Activated B cell treated with CpG ODN at 0.5 μM for 24 hours (primary cell): ENCODE measurements at regions of chrX and their contacts with region 1.

Region 1: GRCh38 chrX:101407748-101408531 is at the starts of genes GLA and HNRNPH2:
- DNase-seq: peak; percentile 71
- ATAC-seq: peak; percentile 86
- H3K4me3 Mint-ChIP-seq: peak within 1 kb of the TSS; percentile 88
- H3K27ac Mint-ChIP-seq: peak within 1 kb of the TSS; percentile 99
- H3K4me1 Mint-ChIP-seq: peaks cover 37% of the 10 kb centered on the region
- H3K27me3 Mint-ChIP-seq: no peaks in the 10 kb centered on the region
- CTCF ChIP-seq: no peak
- total RNA-seq, gene GLA: 32.0 and 32.2 TPM in 2 replicates
- total RNA-seq, gene HNRNPH2: 70.5 and 76.9 TPM in 2 replicates

Region 2: GRCh38 chrX:100819837-100820666 is 587.9 kb before region 1 on chrX and contains the start of gene CSTF2:
- CTCF ChIA-PET with region 1: no interaction called
- POLR2A ChIA-PET with region 1: no interaction called
- intact Hi-C with region 1: loop called (anchors 10 kb)
- DNase-seq: peak; percentile 68
- ATAC-seq: peak; percentile 96
- H3K4me3 Mint-ChIP-seq: peak within 1 kb of the TSS; percentile 93
- H3K27ac Mint-ChIP-seq: peak within 1 kb of the TSS; percentile 94
- H3K4me1 Mint-ChIP-seq: peaks cover 4% of the 10 kb centered on the region
- H3K27me3 Mint-ChIP-seq: peaks cover 5% of the 10 kb centered on the region
- CTCF ChIP-seq: no peak
- total RNA-seq, gene CSTF2: 27.7 TPM in 2 replicates

Region 3: GRCh38 chrX:101348452-101349192 is 59.3 kb before region 1 on chrX and contains the start of gene TIMM8A:
- CTCF ChIA-PET with region 1: no interaction called
- POLR2A ChIA-PET with region 1: interaction called, 6 read pairs
- intact Hi-C with region 1: loop called (anchors 1 kb)
- DNase-seq: peak; percentile 71
- ATAC-seq: peak; percentile 99
- H3K4me3 Mint-ChIP-seq: peak within 1 kb of the TSS; percentile 91
- H3K27ac Mint-ChIP-seq: peak within 1 kb of the TSS; percentile 89
- H3K4me1 Mint-ChIP-seq: peaks cover 13% of the 10 kb centered on the region
- H3K27me3 Mint-ChIP-seq: no peaks in the 10 kb centered on the region
- CTCF ChIP-seq: no peak
- total RNA-seq, gene TIMM8A: 16.8 and 17.1 TPM in 2 replicates

Region 4: GRCh38 chrX:101370888-101371504 is 36.9 kb before region 1 on chrX:
- CTCF ChIA-PET with region 1: no interaction called
- POLR2A ChIA-PET with region 1: no interaction called
- intact Hi-C with region 1: loop called (anchors 5 kb)
- DNase-seq: no peak
- ATAC-seq: peak; percentile 85
- H3K4me3 Mint-ChIP-seq: peak overlapping the region; percentile 64
- H3K27ac Mint-ChIP-seq: peak overlapping the region; percentile 81
- H3K4me1 Mint-ChIP-seq: peaks cover 52% of the 10 kb centered on the region
- H3K27me3 Mint-ChIP-seq: no peaks in the 10 kb centered on the region
- CTCF ChIP-seq: no peak

Region 5: DNA sequence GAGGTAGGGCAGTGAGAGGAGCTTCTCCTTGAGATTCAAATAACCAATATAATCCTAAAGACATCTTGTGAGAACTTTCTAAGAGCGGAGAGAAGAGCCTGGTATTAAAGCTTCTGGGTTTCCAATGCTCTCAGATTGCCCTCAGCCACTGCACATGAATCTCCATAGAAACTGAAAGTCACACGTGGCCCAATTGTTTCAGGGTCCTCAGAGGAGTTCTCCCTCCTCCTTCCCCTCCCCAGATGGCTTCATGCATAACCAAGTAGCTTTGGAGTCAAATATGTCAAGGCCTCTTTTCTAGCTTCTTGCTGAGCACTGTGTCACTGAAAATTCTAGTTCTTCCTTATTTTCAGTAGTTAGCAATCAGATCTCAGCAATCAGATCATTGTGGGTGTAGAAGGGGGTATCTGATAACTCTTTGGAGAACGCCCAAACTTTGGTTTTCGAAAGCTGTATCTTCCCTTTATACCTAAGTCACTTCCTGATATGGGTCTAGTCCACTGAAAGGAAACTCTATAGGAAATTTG is 24.2 kb before region 1 on chrX:
- CTCF ChIA-PET with region 1: no interaction called
- POLR2A ChIA-PET with region 1: interaction called, 11 read pairs
- intact Hi-C with region 1: loop called (anchors 1 kb)
- DNase-seq: no peak
- ATAC-seq: peak; percentile 51
- H3K4me3 Mint-ChIP-seq: peak overlapping the region; percentile 97
- H3K27ac Mint-ChIP-seq: peak overlapping the region; percentile 98
- H3K4me1 Mint-ChIP-seq: peaks cover 49% of the 10 kb centered on the region
- H3K27me3 Mint-ChIP-seq: no peaks in the 10 kb centered on the region
- CTCF ChIP-seq: no peak

Region 6: GRCh38 chrX:101390664-101391525 is 17.0 kb before region 1 on chrX and contains the start of gene RPL36A:
- CTCF ChIA-PET with region 1: interaction called, 8 read pairs
- POLR2A ChIA-PET with region 1: interaction called, 23 read pairs
- intact Hi-C with region 1: loop called (anchors 1 kb)
- DNase-seq: peak; percentile 61
- ATAC-seq: peak; percentile 76
- H3K4me3 Mint-ChIP-seq: peak within 1 kb of the TSS; percentile 95
- H3K27ac Mint-ChIP-seq: peak within 1 kb of the TSS; percentile 94
- H3K4me1 Mint-ChIP-seq: peaks cover 47% of the 10 kb centered on the region
- H3K27me3 Mint-ChIP-seq: no peaks in the 10 kb centered on the region
- CTCF ChIP-seq: no peak
- total RNA-seq, gene RPL36A: 234 and 287 TPM in 2 replicates

Region 7: GRCh38 chrX:102652031-102652688 is 1244.2 kb after region 1 on chrX:
- CTCF ChIA-PET with region 1: no interaction called
- POLR2A ChIA-PET with region 1: no interaction called
- intact Hi-C with region 1: loop called (anchors 5 kb)
- DNase-seq: no peak
- ATAC-seq: peak; percentile 63
- H3K4me3 Mint-ChIP-seq: peak overlapping the region; percentile 95
- H3K27ac Mint-ChIP-seq: peak overlapping the region; percentile 68
- H3K4me1 Mint-ChIP-seq: peaks cover 15% of the 10 kb centered on the region
- H3K27me3 Mint-ChIP-seq: no peaks in the 10 kb centered on the region
- CTCF ChIP-seq: no peak